Activated CD4-positive, alpha-beta T cell treated with anti-CD3 and anti-CD28 coated beads, Interleukin-2, amount 10 ng/mL, durations not matched to agents 24 days and 14 days (primary cell): ENCODE measurements at regions of chr15 and their contacts with region 1.

Region 1: DNA sequence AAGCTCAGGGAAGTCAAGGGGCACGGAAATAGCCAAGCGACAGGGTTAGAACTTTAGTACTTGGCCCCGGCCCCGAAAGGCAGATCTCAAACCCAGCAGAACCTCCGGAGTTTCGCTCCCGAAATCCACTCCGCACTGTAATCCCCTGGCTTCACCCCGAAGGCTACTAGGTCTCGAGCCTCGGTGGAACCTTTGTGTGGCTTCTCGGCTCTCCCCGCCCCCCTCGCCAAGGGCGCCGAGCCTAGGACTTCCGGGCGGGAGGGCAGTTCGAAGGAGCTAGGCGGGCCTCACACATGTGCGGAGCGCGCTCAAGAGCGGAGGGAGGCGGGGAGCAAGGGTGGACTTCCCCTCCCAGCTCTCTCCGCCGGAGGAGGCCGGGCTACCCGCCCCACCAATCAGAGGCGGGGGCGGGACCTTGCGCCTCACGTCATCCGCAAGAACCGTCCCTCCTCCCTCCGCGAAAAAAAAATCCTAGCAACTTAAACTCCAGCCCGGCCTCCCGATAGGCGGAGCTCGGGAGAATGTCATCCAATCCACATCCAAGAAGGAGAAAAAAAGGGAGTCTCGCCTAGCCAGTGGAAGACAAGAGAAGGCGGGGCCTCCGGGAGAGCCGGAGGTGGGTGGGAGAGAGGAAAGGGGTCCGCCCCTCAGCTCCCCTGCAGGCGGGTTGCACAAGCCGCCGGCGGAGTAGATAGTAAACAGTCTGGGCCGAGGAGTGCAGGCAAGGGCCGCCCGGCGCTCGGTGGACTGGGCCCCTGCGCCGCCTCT is 2.4 kb upstream of the SIN3A start:
- DNase-seq: peak; percentile 99
- H3K4me3 Mint-ChIP-seq: peak overlapping the region; percentile 96
- H3K27ac Mint-ChIP-seq: peak overlapping the region; percentile 99
- H3K4me1 Mint-ChIP-seq: peaks cover 34% of the 10 kb centered on the region
- H3K27me3 Mint-ChIP-seq: no peaks in the 10 kb centered on the region

Region 2: DNA sequence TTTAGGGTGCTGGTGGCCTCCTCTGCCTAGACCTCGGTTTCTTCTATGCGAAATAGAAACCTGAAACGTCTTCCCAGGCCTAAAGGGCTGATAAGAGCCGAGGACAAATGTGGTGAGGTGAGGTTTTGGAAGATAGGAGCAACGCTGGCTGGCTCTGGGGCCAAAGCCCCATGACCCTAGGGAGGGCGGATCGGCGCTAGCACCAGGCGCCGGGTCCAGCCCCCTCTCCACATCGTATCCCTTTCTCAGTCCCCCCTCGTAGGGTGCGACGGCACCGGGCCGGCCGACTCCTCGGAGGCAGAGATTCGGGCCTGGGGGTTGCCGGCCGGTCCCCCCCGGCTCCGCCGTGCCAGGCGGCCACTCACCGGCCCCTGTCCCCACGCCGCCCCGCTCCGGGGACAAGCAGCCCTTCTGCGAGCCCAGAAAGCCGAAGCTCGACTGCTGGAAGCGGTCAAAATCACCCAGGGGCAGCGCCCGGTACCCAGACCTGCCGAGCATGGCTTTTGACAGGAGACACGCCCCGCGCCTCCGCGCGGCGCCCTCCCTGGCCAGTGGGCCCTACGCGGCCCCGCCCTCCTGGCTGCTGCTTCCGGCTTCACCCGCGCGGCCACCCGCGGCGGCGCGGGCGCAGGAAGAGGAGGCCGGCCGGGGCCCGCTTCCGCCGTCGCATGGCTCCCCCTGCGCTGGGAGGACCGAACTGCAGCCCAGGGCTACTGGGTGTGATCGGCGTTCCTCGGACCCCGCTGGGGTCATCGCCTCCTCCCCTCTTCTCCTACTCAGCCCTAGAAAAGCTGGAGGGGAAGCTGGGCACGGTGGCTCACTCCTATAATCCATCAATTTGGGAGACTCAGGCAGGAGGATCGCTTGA is 1461.9 kb before region 1 on chr15 and contains the start of gene STOML1:
- intact Hi-C with region 1: loop called (anchors 10 kb)
- DNase-seq: peak; percentile 100
- H3K4me3 Mint-ChIP-seq: peak within 1 kb of the TSS; percentile 85
- H3K27ac Mint-ChIP-seq: peak within 1 kb of the TSS; percentile 86
- H3K4me1 Mint-ChIP-seq: peaks cover 50% of the 10 kb centered on the region
- H3K27me3 Mint-ChIP-seq: no peaks in the 10 kb centered on the region
- total RNA-seq, gene STOML1: 10.3 and 10.6 TPM in 2 replicates

Region 3: DNA sequence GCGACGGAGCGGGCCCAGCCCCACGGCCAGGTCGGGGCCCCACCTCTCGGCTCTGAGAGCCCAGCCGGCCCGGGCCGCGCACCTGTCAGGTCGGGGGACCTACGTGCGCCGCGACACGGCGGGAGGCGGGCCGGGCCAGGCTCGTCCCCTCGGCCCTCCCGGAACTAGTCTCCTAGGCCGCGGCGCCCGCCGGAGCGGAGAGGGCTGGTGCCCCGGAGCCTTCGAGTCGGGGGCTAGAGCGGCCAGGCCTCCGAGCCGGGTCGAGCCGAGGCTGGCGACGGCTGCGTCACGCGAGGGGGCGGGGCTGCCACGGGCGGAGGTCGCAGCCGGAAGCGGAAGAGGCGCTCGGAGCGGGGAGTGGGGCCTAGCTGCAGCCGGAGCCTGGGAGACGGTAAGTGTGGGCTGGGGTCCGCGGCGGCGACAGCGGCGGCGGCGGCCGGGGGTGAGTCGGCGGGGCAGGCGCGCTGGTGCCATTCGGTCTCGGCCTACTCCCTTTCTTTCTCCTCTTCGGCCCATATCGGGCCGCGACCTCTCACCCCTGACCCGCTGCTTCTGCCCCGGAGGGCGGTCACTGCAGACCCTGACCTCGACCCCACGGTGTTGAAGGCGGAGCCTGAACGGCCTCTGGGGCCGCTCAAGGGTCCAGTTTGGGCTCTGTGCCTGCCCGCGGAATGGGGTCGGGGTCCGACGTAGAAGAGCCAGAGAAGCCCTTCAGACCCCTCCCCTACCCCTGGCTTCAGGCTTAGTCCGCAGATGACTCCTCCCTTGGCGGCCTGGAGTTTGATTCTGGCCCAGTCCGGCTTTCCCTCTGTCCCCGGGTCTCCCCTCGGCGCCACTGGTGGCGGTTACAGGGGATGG is 838.1 kb before region 1 on chr15 and contains the start of gene CLK3:
- intact Hi-C with region 1: loop called (anchors 2 kb)
- DNase-seq: peak; percentile 99
- H3K4me3 Mint-ChIP-seq: peak within 1 kb of the TSS; percentile 95
- H3K27ac Mint-ChIP-seq: peak within 1 kb of the TSS; percentile 97
- H3K4me1 Mint-ChIP-seq: peaks cover 41% of the 10 kb centered on the region
- H3K27me3 Mint-ChIP-seq: no peaks in the 10 kb centered on the region
- total RNA-seq, gene CLK3: 112 and 113 TPM in 2 replicates

Region 4: DNA sequence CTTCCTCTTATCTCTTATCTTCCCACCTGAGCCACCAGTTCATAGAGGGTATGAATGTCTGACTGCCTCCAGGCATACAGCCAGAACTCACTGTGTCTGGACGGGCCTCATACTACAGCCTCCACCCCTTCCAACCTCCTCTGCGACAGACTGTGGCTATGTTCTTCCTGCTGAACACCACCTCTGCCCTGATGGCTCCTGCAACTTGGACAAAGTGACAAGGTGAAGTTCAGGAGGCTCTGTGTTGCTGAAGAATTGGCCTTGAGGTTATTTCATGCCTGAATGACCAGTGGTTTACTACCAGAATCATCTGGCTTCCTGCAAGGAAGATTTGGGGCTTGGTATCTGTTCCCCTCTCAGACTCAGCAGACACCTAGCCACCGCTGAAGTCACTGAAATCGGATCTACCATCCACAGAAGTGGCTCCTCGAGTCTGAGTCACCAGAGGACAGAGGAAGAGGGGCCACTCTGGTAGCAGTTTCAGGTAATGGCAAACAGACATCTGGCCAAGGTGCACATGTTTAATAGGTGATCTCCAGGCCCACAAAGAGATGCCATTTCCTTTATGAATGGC is 596.7 kb before region 1 on chr15:
- intact Hi-C with region 1: no loop called
- DNase-seq: no peak
- H3K4me3 Mint-ChIP-seq: no peak overlapping the region
- H3K27ac Mint-ChIP-seq: peak overlapping the region; percentile 44
- H3K4me1 Mint-ChIP-seq: peaks cover 22% of the 10 kb centered on the region
- H3K27me3 Mint-ChIP-seq: no peaks in the 10 kb centered on the region

Region 5: GRCh38 chr15:74937596-74938296 is 516.1 kb before region 1 on chr15 and contains the start of gene COX5A:
- intact Hi-C with region 1: loop called (anchors 5 kb)
- DNase-seq: peak; percentile 97
- H3K4me3 Mint-ChIP-seq: peak within 1 kb of the TSS; percentile 92
- H3K27ac Mint-ChIP-seq: peak within 1 kb of the TSS; percentile 88
- H3K4me1 Mint-ChIP-seq: peaks cover 23% of the 10 kb centered on the region
- H3K27me3 Mint-ChIP-seq: no peaks in the 10 kb centered on the region
- total RNA-seq, gene COX5A: 314 and 317 TPM in 2 replicates

Region 6: GRCh38 chr15:75215107-75216004 is 238.5 kb before region 1 on chr15:
- intact Hi-C with region 1: no loop called
- DNase-seq: no peak
- H3K4me3 Mint-ChIP-seq: no peak overlapping the region
- H3K27ac Mint-ChIP-seq: no peak overlapping the region
- H3K4me1 Mint-ChIP-seq: peaks cover 4% of the 10 kb centered on the region
- H3K27me3 Mint-ChIP-seq: no peaks in the 10 kb centered on the region

Region 7: DNA sequence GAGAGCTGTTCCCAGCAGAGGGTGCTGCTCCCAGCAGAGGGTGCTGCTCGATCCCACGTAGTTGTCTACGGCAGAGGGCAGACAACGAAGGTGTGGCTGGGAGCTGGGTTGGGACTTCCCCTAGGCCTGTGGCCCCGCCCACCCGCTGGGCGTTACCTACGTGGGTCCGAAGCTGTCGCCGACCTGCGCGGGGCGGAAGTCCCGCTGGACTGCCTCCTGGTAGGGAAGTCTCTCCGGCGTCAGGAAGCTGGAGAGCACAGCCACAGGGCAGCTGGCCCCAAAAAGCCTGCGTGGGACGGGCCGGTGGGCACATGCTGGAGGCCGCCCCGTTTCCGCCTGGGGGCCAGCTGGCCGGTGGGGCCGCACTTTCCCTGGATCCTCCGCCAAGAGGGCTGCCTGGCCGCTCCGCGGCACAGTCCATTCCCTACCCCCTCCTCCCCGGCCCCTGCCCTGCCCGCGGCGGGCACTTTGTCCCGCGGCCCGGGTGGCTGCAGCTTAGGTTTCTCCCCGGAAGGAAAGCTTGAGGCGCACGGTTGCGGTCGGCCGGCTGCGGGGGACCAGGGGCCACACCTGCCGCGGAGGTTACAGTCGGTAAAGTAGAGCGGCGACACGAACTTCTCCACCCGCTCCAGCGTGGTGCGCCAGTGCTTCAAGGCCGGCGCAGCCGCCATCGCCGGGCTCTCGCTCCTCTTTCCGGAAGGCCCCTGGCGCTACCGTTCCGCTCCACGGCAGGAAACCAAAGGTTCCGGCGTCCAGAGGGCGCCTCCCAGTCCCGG is 85.8 kb before region 1 on chr15 and contains the start of gene MAN2C1:
- intact Hi-C with region 1: loop called (anchors 1 kb)
- DNase-seq: peak; percentile 98
- H3K4me3 Mint-ChIP-seq: peak within 1 kb of the TSS; percentile 91
- H3K27ac Mint-ChIP-seq: peak within 1 kb of the TSS; percentile 96
- H3K4me1 Mint-ChIP-seq: peaks cover 24% of the 10 kb centered on the region
- H3K27me3 Mint-ChIP-seq: no peaks in the 10 kb centered on the region
- total RNA-seq, gene MAN2C1: 232 and 255 TPM in 2 replicates

Region 8: GRCh38 chr15:75431682-75432081 is 22.2 kb before region 1 on chr15:
- intact Hi-C with region 1: no loop called
- DNase-seq: no peak
- H3K4me3 Mint-ChIP-seq: no peak overlapping the region
- H3K27ac Mint-ChIP-seq: no peak overlapping the region
- H3K4me1 Mint-ChIP-seq: peaks cover 12% of the 10 kb centered on the region
- H3K27me3 Mint-ChIP-seq: no peaks in the 10 kb centered on the region

Region 9: DNA sequence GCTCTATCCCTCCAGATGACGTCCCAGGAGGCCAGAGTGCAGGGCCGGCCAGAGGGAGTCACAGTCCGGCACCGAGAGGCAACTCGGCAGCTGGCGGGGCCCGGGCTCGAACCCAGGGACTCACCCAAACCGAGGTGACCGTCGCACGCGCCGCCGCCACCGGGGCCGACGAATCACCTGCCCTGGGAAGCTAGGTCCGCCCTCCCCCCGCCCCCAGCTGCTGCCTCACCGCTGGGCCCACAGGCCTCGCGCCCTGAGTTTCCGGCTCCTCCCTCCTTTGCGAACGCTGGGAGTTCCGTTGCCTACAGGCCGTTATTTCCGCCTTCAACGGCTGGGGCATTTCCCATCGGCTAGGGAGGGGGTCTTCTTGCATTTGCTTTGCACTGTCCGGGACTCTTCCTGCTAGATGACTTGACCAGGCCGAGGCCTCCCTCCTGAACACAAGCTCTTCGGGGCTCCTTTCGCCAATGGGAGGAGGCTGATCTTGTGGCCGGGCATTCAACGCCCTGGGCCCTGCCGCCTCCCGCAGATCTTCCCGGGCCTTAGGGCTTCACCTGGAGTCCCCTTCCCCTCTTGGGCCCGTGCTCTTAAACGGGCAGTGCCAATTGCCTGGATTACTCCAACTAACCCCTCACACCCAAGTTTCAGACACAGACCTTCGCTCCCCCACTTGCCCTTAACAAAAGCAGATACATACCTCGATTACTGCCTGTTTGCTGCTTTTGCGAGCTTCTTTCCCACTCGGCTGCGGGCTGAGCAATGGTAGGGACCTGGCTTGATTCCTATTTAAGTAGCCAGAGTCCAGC is 171.9 kb after region 1 on chr15 and contains the start of gene SNUPN:
- intact Hi-C with region 1: loop called (anchors 1 kb)
- DNase-seq: peak; percentile 97
- H3K4me3 Mint-ChIP-seq: peak within 1 kb of the TSS; percentile 93
- H3K27ac Mint-ChIP-seq: peak within 1 kb of the TSS; percentile 94
- H3K4me1 Mint-ChIP-seq: peaks cover 34% of the 10 kb centered on the region
- H3K27me3 Mint-ChIP-seq: no peaks in the 10 kb centered on the region
- total RNA-seq, gene SNUPN: 33.7 and 34.5 TPM in 2 replicates

Region 10: GRCh38 chr15:77419836-77420609 is 1966.1 kb after region 1 on chr15 and contains the start of gene PEAK1:
- intact Hi-C with region 1: loop called (anchors 5 kb)
- DNase-seq: peak; percentile 100
- H3K4me3 Mint-ChIP-seq: peak within 1 kb of the TSS; percentile 96
- H3K27ac Mint-ChIP-seq: peak within 1 kb of the TSS; percentile 94
- H3K4me1 Mint-ChIP-seq: peaks cover 29% of the 10 kb centered on the region
- H3K27me3 Mint-ChIP-seq: no peaks in the 10 kb centered on the region
- total RNA-seq, gene PEAK1: 25.9 and 28.2 TPM in 2 replicates